Breast epithelium (tissue), 4 donors: ENCODE measurements at regions of chr12 and their contacts with region 1.

Region 1: DNA sequence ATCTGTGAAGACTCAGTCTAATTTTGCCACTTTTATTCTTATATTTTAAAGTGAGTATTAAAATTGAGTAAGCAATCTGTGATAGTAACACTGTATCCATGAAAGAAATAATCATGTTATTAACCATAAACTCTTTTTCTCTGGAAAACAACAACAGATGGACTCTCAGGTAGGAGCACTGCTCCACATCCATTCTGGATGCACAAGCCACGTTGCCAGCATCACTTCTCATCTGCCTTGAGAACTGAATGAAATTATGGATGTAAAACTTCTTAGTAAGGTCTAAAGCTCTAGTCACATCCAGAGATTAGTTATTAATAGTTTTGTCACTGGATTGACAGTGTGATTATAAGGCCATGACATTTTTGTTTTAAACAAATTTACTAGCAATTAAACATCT is 489.1 kb upstream of the SYT1 start:
- DNase-seq: no peak
- H3K4me3 ChIP-seq: no peak overlapping the region
- H3K27ac ChIP-seq: no peak overlapping the region
- H3K4me1 ChIP-seq: no peaks in the 10 kb centered on the region
- H3K27me3 ChIP-seq: no peaks in the 10 kb centered on the region
- CTCF ChIP-seq: no peak
- POLR2A ChIP-seq: no peak

Region 2: GRCh38 chr12:78120866-78121560 is 254.4 kb before region 1 on chr12:
- intact Hi-C with region 1: no loop called
- DNase-seq: no peak
- H3K4me3 ChIP-seq: no peak overlapping the region
- H3K27ac ChIP-seq: no peak overlapping the region
- H3K4me1 ChIP-seq: no peaks in the 10 kb centered on the region
- H3K27me3 ChIP-seq: no peaks in the 10 kb centered on the region
- CTCF ChIP-seq: peak in 1 of 3 donors; percentile 23
- POLR2A ChIP-seq: no peak

Region 3: DNA sequence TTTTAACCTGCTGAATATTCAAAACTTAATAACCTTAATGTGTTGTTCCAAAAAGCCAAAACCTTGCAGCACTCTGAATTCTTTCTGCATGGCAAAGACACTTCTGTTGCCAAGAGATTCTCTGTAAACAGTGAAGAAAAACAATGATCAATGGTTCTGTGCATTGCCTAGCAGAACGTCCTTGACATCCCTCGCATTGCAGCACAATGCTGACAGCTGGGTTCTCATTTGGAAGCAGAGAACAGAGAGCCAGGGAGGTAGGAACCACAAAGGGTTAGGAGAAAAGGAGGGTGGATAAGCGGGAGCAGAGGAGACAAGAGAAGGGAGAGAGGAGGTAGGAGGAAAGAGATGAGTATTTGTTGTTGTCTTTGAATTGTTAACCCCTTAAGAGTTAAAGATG is 43.7 kb before region 1 on chr12:
- intact Hi-C with region 1: loop called (anchors 2 kb)
- DNase-seq: no peak
- H3K4me3 ChIP-seq: no peak overlapping the region
- H3K27ac ChIP-seq: no peak overlapping the region
- H3K4me1 ChIP-seq: no peaks in the 10 kb centered on the region
- H3K27me3 ChIP-seq: no peaks in the 10 kb centered on the region
- CTCF ChIP-seq: no peak
- POLR2A ChIP-seq: no peak